B cell (primary cell): ENCODE measurements at regions of chr5 and their contacts with region 1.

Region 1: GRCh38 chr5:69166686-69167492 is at the start of gene CCNB1:
- DNase-seq: peak; percentile 97
- ATAC-seq: peak; percentile 100
- H3K4me3 ChIP-seq: peak within 1 kb of the TSS; percentile 32 to 89 (median 84)
- H3K4me3 Mint-ChIP-seq: peak within 1 kb of the TSS; percentile 97
- H3K27ac ChIP-seq: peak within 1 kb of the TSS; percentile 55 to 74
- H3K27ac Mint-ChIP-seq: peak within 1 kb of the TSS; percentile 95
- H3K4me1 ChIP-seq: peaks cover 10 to 17% of the 10 kb centered on the region in 2 donors
- H3K4me1 Mint-ChIP-seq: peaks cover 22% of the 10 kb centered on the region
- H3K27me3 ChIP-seq: no peaks in the 10 kb centered on the region
- H3K27me3 Mint-ChIP-seq: no peaks in the 10 kb centered on the region
- CTCF ChIP-seq: no peak
- total RNA-seq, gene CCNB1: 8.5 and 8.6 TPM in 2 replicates

Region 2: DNA sequence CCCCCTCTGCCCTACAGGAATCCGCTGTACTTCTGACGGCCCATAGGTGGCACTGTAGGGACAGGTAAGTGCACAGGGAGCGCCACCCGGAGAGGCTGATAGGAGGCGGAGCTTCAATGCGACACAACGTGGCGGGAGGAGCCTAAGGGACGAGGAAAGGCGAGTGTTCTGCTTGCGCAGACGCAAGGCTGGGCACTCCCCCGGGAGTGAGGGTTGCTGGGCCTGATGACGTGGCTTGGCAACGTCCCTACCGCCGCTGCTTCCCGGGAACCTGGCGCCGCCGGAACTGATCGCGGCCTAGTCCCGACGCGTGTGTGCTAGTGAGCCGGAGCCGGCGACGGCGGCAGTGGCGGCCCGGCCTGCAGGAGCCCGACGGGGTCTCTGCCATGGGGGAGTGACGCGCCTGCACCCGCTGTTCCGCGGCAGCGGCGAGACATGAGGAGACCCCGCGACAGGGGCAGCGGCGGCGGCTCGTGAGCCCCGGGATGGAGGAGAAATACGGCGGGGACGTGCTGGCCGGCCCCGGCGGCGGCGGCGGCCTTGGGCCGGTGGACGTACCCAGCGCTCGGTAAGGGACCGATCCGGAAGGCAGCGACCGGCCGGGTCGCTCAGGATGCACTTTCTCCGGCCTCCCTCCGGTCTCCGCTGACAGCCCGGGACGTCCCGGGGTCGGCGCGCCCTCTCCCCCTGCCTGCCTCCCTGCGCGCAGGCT is 73.0 kb before region 1 on chr5 and contains the start of gene SLC30A5:
- CTCF ChIA-PET with region 1: interaction called, 7 read pairs
- POLR2A ChIA-PET with region 1: interaction called, 6 read pairs
- intact Hi-C with region 1: loop called (anchors 1 kb)
- DNase-seq: peak; percentile 99
- ATAC-seq: peak; percentile 99
- H3K4me3 ChIP-seq: peak within 1 kb of the TSS; percentile 83 to 90 (median 86)
- H3K4me3 Mint-ChIP-seq: peak within 1 kb of the TSS; percentile 87
- H3K27ac ChIP-seq: peak within 1 kb of the TSS; percentile 73 to 99
- H3K27ac Mint-ChIP-seq: peak within 1 kb of the TSS; percentile 86
- H3K4me1 ChIP-seq: peaks cover 11 to 14% of the 10 kb centered on the region in 2 donors
- H3K4me1 Mint-ChIP-seq: peaks cover 31% of the 10 kb centered on the region
- H3K27me3 ChIP-seq: no peaks in the 10 kb centered on the region
- H3K27me3 Mint-ChIP-seq: no peaks in the 10 kb centered on the region
- CTCF ChIP-seq: peak; percentile 80
- total RNA-seq, gene SLC30A5: 35.3 and 35.8 TPM in 2 replicates

Region 3: GRCh38 chr5:69189162-69190086 is 22.5 kb after region 1 on chr5 and contains the start of gene CENPH:
- CTCF ChIA-PET with region 1: interaction called, 3 read pairs
- POLR2A ChIA-PET with region 1: no interaction called
- intact Hi-C with region 1: loop called (anchors 1 kb)
- DNase-seq: peak; percentile 91
- ATAC-seq: peak; percentile 92
- H3K4me3 ChIP-seq: peak within 1 kb of the TSS; percentile 64 to 96 (median 80)
- H3K4me3 Mint-ChIP-seq: peak within 1 kb of the TSS; percentile 95
- H3K27ac ChIP-seq: peak within 1 kb of the TSS; percentile 30 to 88
- H3K27ac Mint-ChIP-seq: peak within 1 kb of the TSS; percentile 93
- H3K4me1 ChIP-seq: peaks cover 9 to 14% of the 10 kb centered on the region in 2 donors
- H3K4me1 Mint-ChIP-seq: peaks cover 17% of the 10 kb centered on the region
- H3K27me3 ChIP-seq: no peaks in the 10 kb centered on the region
- H3K27me3 Mint-ChIP-seq: no peaks in the 10 kb centered on the region
- CTCF ChIP-seq: no peak
- total RNA-seq, gene CENPH: 11.9 and 12.0 TPM in 2 replicates

Region 4: DNA sequence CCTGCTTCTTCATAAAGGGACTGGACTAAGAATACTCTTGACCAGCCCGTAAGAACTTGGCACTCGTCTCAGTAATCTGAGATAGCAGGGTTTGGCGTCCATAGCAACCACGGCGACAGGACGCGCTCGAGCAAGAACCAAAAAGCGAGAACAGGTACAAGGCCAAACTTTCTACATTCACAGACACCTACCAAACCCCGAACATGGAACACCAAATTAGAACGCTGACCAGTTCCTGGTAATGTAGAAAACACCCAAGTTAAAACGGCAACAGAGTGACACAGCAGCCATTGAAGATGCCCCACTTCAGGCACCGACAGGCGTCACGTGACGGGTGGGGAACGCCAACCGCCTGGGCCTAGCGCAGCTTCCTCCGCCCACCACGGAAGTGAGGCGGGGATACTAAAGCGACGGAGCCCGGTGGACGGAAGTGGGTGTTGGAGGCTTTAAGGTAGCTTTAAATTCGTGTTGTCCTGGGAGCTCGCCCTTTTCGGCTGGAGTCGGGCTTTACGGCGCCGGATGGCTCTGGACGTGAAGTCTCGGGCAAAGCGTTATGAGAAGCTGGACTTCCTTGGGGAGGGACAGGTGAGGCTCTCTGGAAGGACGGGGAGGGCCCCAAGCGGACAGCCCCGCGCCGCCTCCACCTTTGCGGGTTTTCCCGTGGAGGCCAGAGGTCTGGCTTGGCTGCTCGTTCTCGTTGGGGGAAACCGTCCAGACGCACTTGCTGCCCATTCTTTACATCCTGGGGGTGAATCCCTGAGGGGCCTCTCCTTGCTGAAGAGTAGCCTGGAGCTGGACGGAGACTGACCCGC is 67.8 kb after region 1 on chr5 and contains the start of gene CDK7:
- CTCF ChIA-PET with region 1: no interaction called
- POLR2A ChIA-PET with region 1: interaction called, 5 read pairs
- intact Hi-C with region 1: loop called (anchors 1 kb)
- DNase-seq: peak; percentile 92
- ATAC-seq: peak; percentile 99
- H3K4me3 ChIP-seq: peak within 1 kb of the TSS; percentile 77 to 99 (median 94)
- H3K4me3 Mint-ChIP-seq: peak within 1 kb of the TSS; percentile 100
- H3K27ac ChIP-seq: peak within 1 kb of the TSS; percentile 50 to 83
- H3K27ac Mint-ChIP-seq: peak within 1 kb of the TSS; percentile 93
- H3K4me1 ChIP-seq: peaks cover 6 to 21% of the 10 kb centered on the region in 2 donors
- H3K4me1 Mint-ChIP-seq: peaks cover 38% of the 10 kb centered on the region
- H3K27me3 ChIP-seq: no peaks in the 10 kb centered on the region
- H3K27me3 Mint-ChIP-seq: no peaks in the 10 kb centered on the region
- CTCF ChIP-seq: no peak
- total RNA-seq, gene CDK7: 30.6 and 36.5 TPM in 2 replicates

Region 5: DNA sequence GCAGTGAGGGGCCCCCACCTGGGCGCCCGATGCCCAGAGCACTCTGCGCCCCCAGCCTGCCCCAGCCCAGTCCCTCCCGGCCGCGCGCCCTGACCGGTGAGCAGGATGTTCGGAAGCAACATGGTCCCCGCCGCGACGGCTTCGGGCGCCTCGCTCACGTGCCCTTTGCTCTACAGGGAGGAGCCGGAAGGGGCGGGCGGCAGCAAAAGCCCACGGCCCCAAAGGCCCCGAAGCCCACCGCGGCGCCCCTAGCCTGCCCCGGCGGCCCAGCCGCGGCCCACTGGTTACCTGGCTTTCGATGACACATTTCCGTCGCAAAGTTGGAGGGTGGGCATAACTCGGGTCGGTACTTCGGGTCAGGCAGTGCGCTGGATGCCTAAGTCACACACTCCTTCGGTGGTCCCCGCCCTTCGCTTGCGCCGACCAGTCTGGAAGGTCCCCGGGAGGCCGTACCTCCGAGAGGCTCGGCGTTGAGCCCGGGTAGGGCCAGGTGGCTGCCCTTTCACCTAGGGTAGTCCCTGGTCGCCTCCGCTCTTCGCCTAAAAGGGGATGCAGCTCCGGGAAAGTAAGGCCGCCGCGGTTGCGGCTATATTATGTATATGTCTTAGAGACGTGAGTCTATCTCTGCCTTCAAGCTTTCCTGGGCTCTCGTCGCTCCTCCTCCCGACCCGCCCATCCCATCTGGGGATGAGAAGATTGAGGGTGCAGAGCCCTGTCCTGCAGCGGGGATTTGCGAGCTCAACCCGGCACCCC is 202.7 kb after region 1 on chr5 and contains the starts of genes AK6, RAD17 and TAF9:
- CTCF ChIA-PET with region 1: no interaction called
- POLR2A ChIA-PET with region 1: no interaction called
- intact Hi-C with region 1: loop called (anchors 1 kb)
- DNase-seq: peak; percentile 99
- ATAC-seq: peak; percentile 95
- H3K4me3 ChIP-seq: peak within 1 kb of the TSS; percentile 69 to 89 (median 83)
- H3K4me3 Mint-ChIP-seq: peak within 1 kb of the TSS; percentile 96
- H3K27ac ChIP-seq: peak within 1 kb of the TSS; percentile 96 to 99
- H3K27ac Mint-ChIP-seq: peak within 1 kb of the TSS; percentile 100
- H3K4me1 ChIP-seq: peaks cover 22 to 26% of the 10 kb centered on the region in 2 donors
- H3K4me1 Mint-ChIP-seq: peaks cover 41% of the 10 kb centered on the region
- H3K27me3 ChIP-seq: no peaks in the 10 kb centered on the region
- H3K27me3 Mint-ChIP-seq: no peaks in the 10 kb centered on the region
- CTCF ChIP-seq: no peak
- total RNA-seq, gene AK6: 21.7 and 25.4 TPM in 2 replicates
- total RNA-seq, gene RAD17: 39.6 and 41.0 TPM in 2 replicates
- total RNA-seq, gene TAF9: 41.6 and 42.0 TPM in 2 replicates

Region 6: DNA sequence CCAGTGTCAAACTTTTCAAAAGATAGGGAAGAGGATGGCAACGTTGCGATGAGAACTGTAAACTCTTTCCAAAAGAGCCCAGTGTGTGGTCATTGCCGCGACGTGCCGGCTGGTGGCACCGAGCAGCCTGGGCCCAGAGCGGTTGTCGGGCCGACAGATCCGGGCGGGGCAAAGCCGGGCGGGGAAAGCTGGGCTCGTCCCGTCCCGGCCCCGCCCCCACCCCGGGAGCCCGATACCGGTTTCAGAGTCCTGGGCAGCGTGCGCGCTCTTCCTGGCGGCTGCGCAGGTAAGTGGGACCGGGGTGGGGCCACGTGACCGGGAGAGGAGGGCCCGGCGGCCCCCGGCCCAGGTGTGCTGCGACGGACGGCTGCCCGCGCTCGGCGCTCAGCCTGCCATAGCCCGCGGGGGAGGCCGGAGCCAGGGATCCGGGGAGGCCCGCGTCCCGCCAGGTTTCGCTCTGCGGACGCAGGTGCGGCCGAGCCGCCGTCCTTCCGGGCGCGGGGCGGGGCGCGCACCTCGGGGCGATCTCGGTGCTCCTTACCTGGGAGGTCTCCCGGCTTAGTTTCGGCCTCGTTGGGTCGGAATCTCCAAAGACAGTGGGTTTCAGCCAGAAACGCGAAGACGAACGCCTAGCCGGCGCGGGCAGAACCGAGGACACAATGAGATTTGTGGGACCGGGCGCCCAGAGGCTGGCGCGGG is 248.1 kb after region 1 on chr5 and contains the start of gene MARVELD2:
- CTCF ChIA-PET with region 1: no interaction called
- POLR2A ChIA-PET with region 1: no interaction called
- intact Hi-C with region 1: no loop called
- DNase-seq: peak; percentile 62
- ATAC-seq: peak; percentile 92
- H3K4me3 ChIP-seq: peak within 1 kb of the TSS in 4 of 5 experiments; percentile 34 to 74 (median 60)
- H3K4me3 Mint-ChIP-seq: peak within 1 kb of the TSS; percentile 78
- H3K27ac ChIP-seq: peak within 1 kb of the TSS in 1 of 2 donors; percentile 45
- H3K27ac Mint-ChIP-seq: no peak within 1 kb of the TSS
- H3K4me1 ChIP-seq: peaks cover 5 to 9% of the 10 kb centered on the region in 2 donors
- H3K4me1 Mint-ChIP-seq: peaks cover 10% of the 10 kb centered on the region
- H3K27me3 ChIP-seq: no peaks in the 10 kb centered on the region
- H3K27me3 Mint-ChIP-seq: no peaks in the 10 kb centered on the region
- CTCF ChIP-seq: no peak
- total RNA-seq, gene MARVELD2: 0.94 and 1.7 TPM in 2 replicates